Left ventricle myocardium inferior (tissue), 1 donor: ENCODE measurements at regions of chr21 and their contacts with region 1.

Region 1: GRCh38 chr21:14414932-14415508 is 32.1 kb upstream of the HSPA13 start:
- DNase-seq: no peak
- H3K4me3 ChIP-seq: no peak overlapping the region
- H3K27ac ChIP-seq: no peak overlapping the region
- H3K4me1 ChIP-seq: no peaks in the 10 kb centered on the region
- H3K27me3 ChIP-seq: peaks cover 3% of the 10 kb centered on the region
- CTCF ChIP-seq: no peak

Region 2: GRCh38 chr21:14479241-14479786 is 64.3 kb after region 1 on chr21:
- intact Hi-C with region 1: loop called (anchors 10 kb)
- DNase-seq: no peak
- H3K4me3 ChIP-seq: no peak overlapping the region
- H3K27ac ChIP-seq: no peak overlapping the region
- H3K4me1 ChIP-seq: peaks cover 6% of the 10 kb centered on the region
- H3K27me3 ChIP-seq: no peaks in the 10 kb centered on the region
- CTCF ChIP-seq: no peak

Region 3: DNA sequence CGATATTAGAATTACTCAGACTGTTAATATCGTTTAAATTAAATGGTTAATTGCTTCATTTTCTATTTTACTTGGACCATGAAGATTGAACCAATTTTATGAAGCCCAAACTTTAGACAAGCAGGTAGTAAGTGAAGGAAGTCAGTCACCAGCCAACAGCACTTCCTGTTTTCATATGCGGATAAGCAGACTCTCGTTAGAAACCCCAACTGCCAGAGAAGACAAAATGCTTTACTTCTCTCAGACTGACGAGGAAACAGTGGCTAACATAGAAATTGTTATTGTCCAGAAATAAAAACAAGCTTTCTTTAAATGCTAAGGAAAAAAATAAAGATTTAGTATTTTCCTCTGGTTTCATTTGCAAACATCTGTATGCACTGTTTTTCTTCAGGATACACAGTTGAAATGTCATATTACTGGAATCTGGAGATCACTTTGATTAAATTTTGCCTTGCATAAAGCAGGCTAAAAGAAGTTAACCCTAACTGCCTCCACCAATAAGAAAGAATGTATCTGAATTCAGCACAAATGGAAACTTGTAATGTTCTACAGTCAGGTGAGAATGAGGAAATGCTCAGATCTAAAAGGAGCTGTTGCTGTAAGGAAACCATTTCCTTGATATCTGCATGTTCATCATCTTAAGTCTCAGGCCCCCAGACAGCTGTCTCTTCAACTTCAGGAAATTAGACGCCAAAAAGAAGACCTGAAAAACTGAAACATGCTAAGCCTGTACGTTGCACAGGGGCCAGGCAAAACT is 260.9 kb after region 1 on chr21:
- intact Hi-C with region 1: no loop called
- DNase-seq: no peak
- H3K4me3 ChIP-seq: no peak overlapping the region
- H3K27ac ChIP-seq: no peak overlapping the region
- H3K4me1 ChIP-seq: no peaks in the 10 kb centered on the region
- H3K27me3 ChIP-seq: no peaks in the 10 kb centered on the region
- CTCF ChIP-seq: no peak